Posterior cingulate gyrus (tissue), 11 donors: ENCODE measurements at regions of chrX and their contacts with region 1.

Region 1: GRCh38 chrX:71283403-71284143 is at the start of gene NONO:
- DNase-seq: peak; percentile 69 to 96 (median 76)

Region 2: GRCh38 chrX:71254092-71254941 is 29.3 kb before region 1 on chrX and contains the start of gene ZMYM3:
- intact Hi-C with region 1: loop called (anchors 2 kb)
- DNase-seq: peak; percentile 75 to 98 (median 86)

Region 3: GRCh38 chrX:71269801-71270395 is 13.7 kb before region 1 on chrX:
- intact Hi-C with region 1: no loop called
- DNase-seq: peak in 1 of 10 donors; percentile 81

Region 4: DNA sequence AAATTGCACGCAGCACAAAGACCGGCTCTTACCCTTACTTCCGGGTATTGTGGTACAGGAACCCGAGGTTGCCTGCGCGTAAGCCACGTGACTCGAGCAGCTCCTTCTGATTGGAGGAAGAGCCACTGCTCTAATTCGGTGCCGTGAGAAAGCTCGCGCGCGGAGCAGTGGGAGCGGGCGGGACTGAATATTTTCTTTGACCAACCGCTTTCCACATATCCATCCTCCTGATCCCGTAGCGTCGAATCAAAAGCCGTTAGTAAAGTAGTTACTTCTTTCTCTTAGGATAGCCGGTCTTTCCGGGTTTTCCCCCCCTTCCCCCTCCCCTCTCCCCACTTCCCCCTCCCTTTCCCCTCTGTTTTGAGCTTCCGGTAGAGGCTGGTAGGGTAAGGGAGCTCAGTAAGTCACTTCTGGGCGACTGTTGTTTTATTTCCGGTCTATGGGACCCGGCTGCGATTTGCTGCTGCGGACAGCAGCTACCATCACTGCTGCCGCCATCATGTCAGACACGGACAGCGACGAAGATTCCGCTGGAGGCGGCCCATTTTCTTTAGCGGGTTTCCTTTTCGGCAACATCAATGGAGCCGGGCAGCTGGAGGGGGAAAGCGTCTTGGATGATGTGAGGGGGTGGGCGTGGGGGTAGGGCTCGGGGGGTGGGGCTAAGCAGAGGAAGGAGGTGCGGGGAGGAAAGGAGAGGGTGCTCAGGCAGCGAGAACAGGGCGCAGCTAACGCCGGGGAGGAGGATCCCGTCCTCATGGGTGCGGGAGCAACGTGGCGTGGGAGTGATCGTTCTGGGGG is 82.5 kb after region 1 on chrX and contains the start of gene TAF1:
- intact Hi-C with region 1: loop called (anchors 5 kb)
- DNase-seq: peak; percentile 86 to 98 (median 92)